Posterior vena cava (tissue), 2 donors: ENCODE measurements at regions of chr15 and their contacts with region 1.

Region 1: GRCh38 chr15:62782039-62782791 is 260.3 kb upstream of the TPM1 start:
- DNase-seq: no peak

Region 2: GRCh38 chr15:62828364-62828763 is 46.1 kb after region 1 on chr15:
- intact Hi-C with region 1: no loop called
- DNase-seq: no peak

Region 3: DNA sequence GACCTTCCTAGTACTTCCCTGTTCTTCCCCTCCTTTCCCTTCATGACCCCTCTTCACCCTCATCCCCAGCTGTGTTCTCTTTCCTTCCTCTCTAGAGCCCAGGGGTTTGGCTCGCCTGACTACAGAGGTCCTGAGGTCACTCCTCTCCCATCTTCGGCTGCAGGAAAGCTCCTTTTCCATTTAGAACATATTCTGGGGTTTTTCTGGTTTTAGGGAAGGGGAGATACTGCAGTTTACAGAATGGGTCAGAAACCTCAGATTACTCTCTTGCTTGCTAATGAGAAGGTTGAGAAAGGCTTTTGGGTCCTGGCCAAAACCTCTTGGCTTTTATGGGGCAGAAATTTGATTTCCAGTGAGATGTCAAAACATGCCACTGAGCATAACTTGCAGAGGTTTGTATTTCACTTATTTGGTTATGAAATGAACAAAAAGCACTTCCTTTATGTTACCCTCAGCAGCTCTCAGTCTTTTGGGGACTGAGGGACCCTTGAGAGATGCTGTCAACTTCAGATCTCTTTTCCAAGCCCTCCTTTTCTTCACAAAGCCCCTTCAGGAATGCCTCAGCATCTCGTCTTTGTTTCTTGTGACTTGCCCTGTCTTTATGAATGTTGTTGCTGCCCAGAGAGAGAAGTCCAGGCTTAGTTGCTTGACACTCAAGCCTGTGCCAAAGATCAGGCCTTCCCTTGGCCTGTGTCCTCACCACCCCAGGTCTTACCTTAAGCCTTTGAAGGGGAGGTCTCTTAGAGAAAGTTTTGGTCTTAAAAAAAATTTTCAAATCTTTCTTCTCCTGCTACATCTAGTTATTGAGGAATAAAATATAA is 138.7 kb after region 1 on chr15:
- intact Hi-C with region 1: loop called in 1 of 2 experiments (anchors 5 kb)
- DNase-seq: no peak